OCI-LY7 (cell line): ENCODE measurements at regions of chr19 and their contacts with region 1.

Region 1: DNA sequence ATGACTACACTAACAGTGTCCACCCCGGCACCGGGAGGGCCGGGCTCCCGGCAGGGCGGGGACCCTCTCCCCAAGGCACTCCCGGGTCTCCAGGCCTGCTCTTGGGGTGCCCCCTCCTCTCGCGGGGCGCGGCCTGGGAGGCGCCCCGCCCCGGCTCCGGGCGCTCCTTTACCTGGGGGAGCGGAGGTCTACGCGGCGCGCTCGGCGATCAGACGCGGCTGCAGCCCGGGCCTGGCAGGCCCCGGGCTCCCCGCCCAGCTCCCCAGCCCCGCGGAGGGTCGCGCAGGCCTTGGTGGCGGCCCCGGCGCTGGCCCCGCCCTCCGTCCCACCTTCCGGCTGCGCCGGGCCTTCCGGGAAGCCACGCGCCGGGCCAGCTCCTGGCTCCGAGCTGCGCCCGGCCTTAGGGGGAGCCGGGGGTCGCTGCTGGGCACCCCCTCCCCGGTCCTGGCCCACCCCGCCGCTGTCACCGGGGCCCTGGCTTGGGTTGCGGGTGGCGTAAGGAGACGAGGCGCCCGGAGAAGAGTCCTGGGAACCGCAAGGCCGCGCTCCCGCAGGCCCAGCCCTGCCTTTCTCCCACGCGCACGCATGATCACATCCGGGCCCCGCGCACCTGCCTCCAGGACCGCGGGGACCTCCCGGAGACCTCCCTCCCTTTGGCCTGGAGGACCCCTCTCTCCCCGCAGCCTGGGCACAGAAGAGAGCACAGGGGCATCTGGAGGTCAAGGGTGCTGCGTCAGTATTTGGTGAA is at the start of gene C19orf12:
- DNase-seq: peak; percentile 82
- H3K4me3 ChIP-seq: peak within 1 kb of the TSS; percentile 99
- H3K27ac ChIP-seq: peak within 1 kb of the TSS; percentile 68
- H3K4me1 ChIP-seq: peaks cover 24% of the 10 kb centered on the region
- CTCF ChIP-seq: no peak
- total RNA-seq, gene C19orf12: 11.9 and 12.5 TPM in 2 replicates

Region 2: DNA sequence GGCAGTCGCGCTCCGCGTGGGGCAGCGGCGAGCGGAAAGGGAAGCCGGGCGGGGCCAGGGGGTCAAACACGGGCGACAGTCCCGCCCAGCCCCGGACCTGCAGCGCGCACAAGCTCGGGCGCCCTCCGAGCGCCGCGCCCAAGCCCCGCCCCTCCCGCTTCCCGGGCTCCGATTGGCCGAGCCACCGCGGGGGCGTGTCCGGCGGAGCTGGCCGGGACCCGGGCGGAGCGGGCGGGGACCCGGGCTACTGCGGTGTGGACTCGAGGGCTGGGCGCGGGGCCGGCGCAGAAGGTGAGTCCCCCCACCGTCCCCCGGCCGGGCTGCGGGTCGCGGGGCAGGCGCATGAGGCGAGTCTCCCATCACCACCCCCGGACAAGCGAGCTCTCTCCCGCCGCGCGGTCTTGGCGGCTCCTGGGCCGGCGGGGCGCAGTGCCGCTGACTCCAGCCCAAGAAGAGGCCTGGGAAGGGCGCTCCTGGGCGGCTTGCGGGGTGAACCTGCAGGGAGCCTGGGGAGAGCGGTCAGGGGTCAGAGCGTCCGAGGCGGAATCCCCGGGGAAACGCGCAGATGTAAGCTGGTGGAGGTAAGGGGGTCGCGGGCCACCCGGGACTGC is 49.8 kb before region 1 on chr19 and contains the start of gene PLEKHF1:
- CTCF ChIA-PET with region 1: interaction called, 6 read pairs
- POLR2A ChIA-PET with region 1: no interaction called
- intact Hi-C with region 1: loop called (anchors 2 kb)
- DNase-seq: peak; percentile 88
- H3K4me3 ChIP-seq: peak within 1 kb of the TSS; percentile 86
- H3K27ac ChIP-seq: no peak within 1 kb of the TSS
- H3K4me1 ChIP-seq: peaks cover 30% of the 10 kb centered on the region
- CTCF ChIP-seq: no peak
- total RNA-seq, gene PLEKHF1: 7.0 TPM in 2 replicates

Region 3: GRCh38 chr19:29694669-29695627 is 20.2 kb before region 1 on chr19:
- CTCF ChIA-PET with region 1: interaction called, 4 read pairs
- POLR2A ChIA-PET with region 1: interaction called, 4 read pairs
- intact Hi-C with region 1: loop called (anchors 1 kb)
- DNase-seq: peak; percentile 60
- H3K4me3 ChIP-seq: no peak overlapping the region
- H3K27ac ChIP-seq: no peak overlapping the region
- H3K4me1 ChIP-seq: peaks cover 6% of the 10 kb centered on the region
- CTCF ChIP-seq: peak; percentile 84

Region 4: DNA sequence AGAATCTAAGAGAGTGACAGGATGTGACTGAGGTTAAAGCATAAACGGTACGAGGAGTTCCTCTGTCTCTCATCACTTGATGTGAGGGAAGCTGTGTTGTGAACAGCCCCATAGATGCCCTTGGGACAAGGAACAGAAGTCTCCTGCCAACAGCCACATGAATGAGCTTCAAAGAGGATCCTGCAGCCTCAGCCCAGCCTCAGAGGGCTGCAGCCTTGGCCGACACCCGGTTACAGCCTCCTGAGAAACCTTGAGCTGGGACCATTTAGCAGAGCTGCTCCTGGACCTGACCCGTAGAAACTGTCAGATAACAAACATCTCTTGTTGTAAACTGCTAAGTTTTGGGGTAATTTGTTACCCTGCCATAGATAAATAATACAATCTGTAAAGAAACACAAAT is 150.9 kb after region 1 on chr19:
- CTCF ChIA-PET with region 1: no interaction called
- POLR2A ChIA-PET with region 1: no interaction called
- intact Hi-C with region 1: no loop called
- DNase-seq: no peak
- H3K4me3 ChIP-seq: no peak overlapping the region
- H3K27ac ChIP-seq: no peak overlapping the region
- H3K4me1 ChIP-seq: no peaks in the 10 kb centered on the region
- CTCF ChIP-seq: no peak